ENCODE measurements at regions of chr1 and their contacts with region 1.

Region 1: GRCh38 chr1:207811920-207812720 is 60.3 kb downstream of the CD46 start:
- DNase-seq: peak; percentile 81
- ATAC-seq: peak; percentile 51

Region 2: DNA sequence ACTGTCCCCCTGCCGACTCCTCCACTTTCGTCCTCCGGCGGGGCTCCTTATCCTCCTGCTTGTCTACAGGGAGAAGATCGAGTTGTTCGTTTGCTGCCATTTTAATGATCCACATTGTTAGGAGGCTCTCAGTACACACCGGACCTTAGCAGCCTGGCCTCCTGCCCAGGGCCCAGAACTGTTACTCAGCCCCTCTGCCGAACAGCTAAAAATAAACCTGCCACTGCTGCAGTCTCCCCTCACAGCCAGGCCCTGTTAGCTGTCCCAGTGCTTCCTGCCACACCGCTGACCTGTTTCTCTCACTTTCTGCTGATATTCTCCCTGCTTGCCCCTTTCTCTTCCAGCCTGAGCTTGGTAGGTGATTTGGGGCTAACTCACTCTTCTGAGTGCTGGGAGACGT is 1119.1 kb before region 1 on chr1:
- intact Hi-C with region 1: loop called (anchors 10 kb)
- DNase-seq: peak; percentile 87
- ATAC-seq: peak; percentile 83

Region 3: GRCh38 chr1:207890136-207890738 is 78.1 kb after region 1 on chr1:
- intact Hi-C with region 1: no loop called
- DNase-seq: peak; percentile 87
- ATAC-seq: peak; percentile 86

Region 4: GRCh38 chr1:208115924-208116640 is 304.0 kb after region 1 on chr1:
- intact Hi-C with region 1: no loop called
- DNase-seq: no peak
- ATAC-seq: no peak

Measured in Right ventricle myocardium inferior (tissue), 1 donor.